GM12878 (cell line): ENCODE measurements at regions of chr3 and their contacts with region 1.

Region 1: GRCh38 chr3:61251174-61251972 is at the start of gene FHIT:
- DNase-seq: peak; percentile 87
- ATAC-seq: peak; percentile 96
- H3K4me3 ChIP-seq: peak within 1 kb of the TSS; percentile 76
- H3K27ac ChIP-seq: peak within 1 kb of the TSS; percentile 68
- H3K4me1 ChIP-seq: peaks cover 5% of the 10 kb centered on the region; the same call in 1 of the 2 replicates
- H3K27me3 ChIP-seq: no peaks in the 10 kb centered on the region
- CTCF ChIP-seq: peak in 1 of 3 experiments; percentile 21; a peak in 1 of 6 replicates
- EP300 ChIP-seq: no peak
- POLR2A ChIP-seq: peak; percentile 74
- RAD21 ChIP-seq: 0 out of 2 replicates have a peak, but pooled peaks have one; percentile 8
- polyA plus RNA-seq, gene FHIT: 4.2 to 7.9 TPM

Region 2: GRCh38 chr3:60657972-60658371 is 593.4 kb before region 1 on chr3:
- CTCF ChIA-PET with region 1: no interaction called
- POLR2A ChIA-PET with region 1: no interaction called
- RAD21 ChIA-PET with region 1: no interaction called
- SMC1A ChIA-PET with region 1: no interaction called
- in situ Hi-C with region 1: no loop called
- intact Hi-C with region 1: loop called (anchors 10 kb)
- DNase-seq: peak; percentile 61
- ATAC-seq: peak; percentile 97
- H3K4me3 ChIP-seq: no peak overlapping the region
- H3K27ac ChIP-seq: no peak overlapping the region
- H3K4me1 ChIP-seq: no peaks in the 10 kb centered on the region
- H3K27me3 ChIP-seq: no peaks in the 10 kb centered on the region
- CTCF ChIP-seq: no peak
- EP300 ChIP-seq: no peak; a peak in 2 of 4 replicates
- POLR2A ChIP-seq: no peak
- RAD21 ChIP-seq: no peak

Region 3: GRCh38 chr3:60826511-60826910 is 424.9 kb before region 1 on chr3:
- CTCF ChIA-PET with region 1: no interaction called
- POLR2A ChIA-PET with region 1: no interaction called
- RAD21 ChIA-PET with region 1: no interaction called
- SMC1A ChIA-PET with region 1: no interaction called
- in situ Hi-C with region 1: no loop called
- intact Hi-C with region 1: no loop called
- DNase-seq: no peak
- ATAC-seq: no peak
- H3K4me3 ChIP-seq: no peak overlapping the region
- H3K27ac ChIP-seq: no peak overlapping the region
- H3K4me1 ChIP-seq: no peaks in the 10 kb centered on the region
- H3K27me3 ChIP-seq: no peaks in the 10 kb centered on the region
- CTCF ChIP-seq: no peak
- EP300 ChIP-seq: no peak
- POLR2A ChIP-seq: no peak
- RAD21 ChIP-seq: no peak

Region 4: DNA sequence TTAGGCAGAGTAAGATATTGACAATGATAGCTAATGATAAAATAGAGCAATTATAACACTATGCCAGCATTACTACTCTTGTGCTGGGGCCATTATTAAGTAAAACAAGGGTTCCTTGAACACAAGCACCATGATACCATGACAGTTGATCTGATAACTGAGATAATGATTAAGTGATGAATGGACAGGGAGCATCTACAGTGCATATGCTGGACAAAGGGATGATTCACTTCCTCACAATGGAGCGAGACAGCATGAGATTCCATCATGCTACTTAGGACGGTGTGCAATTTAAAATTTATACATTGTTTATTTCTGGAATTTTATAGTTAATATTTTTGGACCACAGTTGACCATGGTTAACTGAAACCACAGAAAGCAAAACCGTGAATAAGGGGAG is 156.8 kb before region 1 on chr3:
- CTCF ChIA-PET with region 1: no interaction called
- POLR2A ChIA-PET with region 1: no interaction called
- RAD21 ChIA-PET with region 1: no interaction called
- SMC1A ChIA-PET with region 1: no interaction called
- in situ Hi-C with region 1: no loop called
- intact Hi-C with region 1: no loop called
- DNase-seq: no peak
- ATAC-seq: no peak
- H3K4me3 ChIP-seq: no peak overlapping the region
- H3K27ac ChIP-seq: no peak overlapping the region
- H3K4me1 ChIP-seq: no peaks in the 10 kb centered on the region
- H3K27me3 ChIP-seq: no peaks in the 10 kb centered on the region
- CTCF ChIP-seq: no peak
- EP300 ChIP-seq: no peak
- POLR2A ChIP-seq: no peak
- RAD21 ChIP-seq: no peak

Region 5: DNA sequence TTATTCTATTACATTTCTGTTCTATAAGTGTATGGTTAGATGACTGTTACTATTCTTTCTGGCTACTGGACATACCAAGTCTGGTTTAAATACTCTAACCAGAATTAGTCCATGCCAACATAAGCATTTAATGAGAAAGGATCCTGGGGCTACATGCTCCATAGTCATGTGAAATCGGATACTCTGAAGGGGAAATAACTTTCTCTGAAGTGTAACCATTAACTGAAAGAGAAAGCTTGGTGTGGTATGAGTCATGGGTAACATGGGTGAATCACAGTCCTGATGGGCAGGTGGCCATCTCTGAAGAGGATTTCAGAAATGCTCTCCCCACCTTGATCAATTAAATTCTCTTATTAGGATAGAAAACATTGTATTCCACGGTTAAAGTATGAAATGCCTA is 69.5 kb before region 1 on chr3:
- CTCF ChIA-PET with region 1: no interaction called
- POLR2A ChIA-PET with region 1: no interaction called
- RAD21 ChIA-PET with region 1: interaction called, 4 read pairs
- SMC1A ChIA-PET with region 1: interaction called, 3 read pairs
- in situ Hi-C with region 1: no loop called
- intact Hi-C with region 1: loop called (anchors 1 kb)
- DNase-seq: peak; percentile 64
- ATAC-seq: peak; percentile 97
- H3K4me3 ChIP-seq: no peak overlapping the region
- H3K27ac ChIP-seq: no peak overlapping the region; the same call in 1 of the 2 replicates
- H3K4me1 ChIP-seq: peaks cover 20% of the 10 kb centered on the region
- H3K27me3 ChIP-seq: no peaks in the 10 kb centered on the region
- CTCF ChIP-seq: no peak
- EP300 ChIP-seq: peak; percentile 60 to 75; a peak in 3 of 4 replicates
- POLR2A ChIP-seq: no peak
- RAD21 ChIP-seq: no peak

Region 6: DNA sequence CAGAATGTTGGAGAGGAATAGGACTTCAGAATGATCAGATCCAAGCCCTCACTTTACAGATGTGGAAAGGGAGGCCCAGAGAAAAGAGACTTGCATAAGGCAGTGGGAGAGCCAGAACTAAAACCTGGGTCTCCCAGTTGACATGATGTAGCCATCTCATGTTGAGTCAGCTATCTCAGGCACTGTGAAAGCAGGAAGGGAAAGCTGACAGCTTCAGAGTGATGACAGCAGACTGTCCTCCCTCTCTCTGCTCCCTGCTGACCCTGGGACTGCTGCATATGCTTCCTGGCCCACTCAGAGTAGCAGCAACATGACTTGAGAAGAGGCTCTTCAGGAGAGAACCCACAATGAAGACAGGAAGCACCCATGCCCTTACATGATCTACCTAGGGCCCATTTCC is 14.8 kb before region 1 on chr3:
- CTCF ChIA-PET with region 1: interaction called, 12 read pairs
- POLR2A ChIA-PET with region 1: interaction called, 11 read pairs
- RAD21 ChIA-PET with region 1: interaction called, 14 read pairs
- SMC1A ChIA-PET with region 1: interaction called, 43 read pairs
- in situ Hi-C with region 1: no loop called
- intact Hi-C with region 1: no loop called
- DNase-seq: peak; percentile 64
- ATAC-seq: peak; percentile 93
- H3K4me3 ChIP-seq: no peak overlapping the region
- H3K27ac ChIP-seq: peak overlapping the region; percentile 72
- H3K4me1 ChIP-seq: peaks cover 31% of the 10 kb centered on the region
- H3K27me3 ChIP-seq: no peaks in the 10 kb centered on the region
- CTCF ChIP-seq: no peak
- EP300 ChIP-seq: 0 out of 4 replicates have a peak, but pooled peaks have one; percentile 16 to 29
- POLR2A ChIP-seq: peak; percentile 64
- RAD21 ChIP-seq: no peak

Region 7: DNA sequence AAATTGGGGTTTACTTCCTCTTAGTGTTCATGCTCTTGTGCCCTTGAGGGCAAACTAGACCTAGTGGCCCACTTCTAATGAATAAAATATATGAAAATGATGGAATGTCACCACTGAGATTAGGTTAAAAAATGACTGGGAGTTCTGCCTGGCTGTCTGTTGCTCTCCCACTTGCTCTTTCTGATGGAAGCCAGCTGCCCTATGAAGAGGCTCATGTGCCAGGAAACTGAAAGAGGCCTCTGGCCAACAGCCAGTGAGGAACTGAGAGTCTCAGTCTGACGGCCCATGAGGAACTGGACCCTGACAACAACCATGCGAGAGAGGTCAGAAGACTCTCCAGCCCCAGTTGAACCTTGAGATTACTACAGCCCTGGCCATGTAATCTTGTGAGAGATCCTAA is 107.0 kb after region 1 on chr3:
- CTCF ChIA-PET with region 1: no interaction called
- POLR2A ChIA-PET with region 1: no interaction called
- RAD21 ChIA-PET with region 1: no interaction called
- SMC1A ChIA-PET with region 1: no interaction called
- in situ Hi-C with region 1: no loop called
- intact Hi-C with region 1: loop called (anchors 1 kb)
- DNase-seq: peak; percentile 76
- ATAC-seq: peak; percentile 99
- H3K4me3 ChIP-seq: no peak overlapping the region
- H3K27ac ChIP-seq: no peak overlapping the region
- H3K4me1 ChIP-seq: peaks cover 16% of the 10 kb centered on the region; the same call in 1 of the 2 replicates
- H3K27me3 ChIP-seq: no peaks in the 10 kb centered on the region
- CTCF ChIP-seq: no peak
- EP300 ChIP-seq: peak; percentile 95 to 99
- POLR2A ChIP-seq: no peak
- RAD21 ChIP-seq: 0 out of 2 replicates have a peak, but pooled peaks have one; percentile 2